ENCODE measurements at regions of chr5 and their contacts with region 1.

Region 1: GRCh38 chr5:154273028-154273617 is 82.6 kb downstream of the GALNT10 start:
- DNase-seq: peak; percentile 31
- CTCF ChIP-seq: no peak

Region 2: GRCh38 chr5:154228696-154229095 is 44.4 kb before region 1 on chr5:
- CTCF ChIA-PET with region 1: no interaction called
- POLR2A ChIA-PET with region 1: no interaction called
- DNase-seq: peak; percentile 71
- CTCF ChIP-seq: no peak

Region 3: DNA sequence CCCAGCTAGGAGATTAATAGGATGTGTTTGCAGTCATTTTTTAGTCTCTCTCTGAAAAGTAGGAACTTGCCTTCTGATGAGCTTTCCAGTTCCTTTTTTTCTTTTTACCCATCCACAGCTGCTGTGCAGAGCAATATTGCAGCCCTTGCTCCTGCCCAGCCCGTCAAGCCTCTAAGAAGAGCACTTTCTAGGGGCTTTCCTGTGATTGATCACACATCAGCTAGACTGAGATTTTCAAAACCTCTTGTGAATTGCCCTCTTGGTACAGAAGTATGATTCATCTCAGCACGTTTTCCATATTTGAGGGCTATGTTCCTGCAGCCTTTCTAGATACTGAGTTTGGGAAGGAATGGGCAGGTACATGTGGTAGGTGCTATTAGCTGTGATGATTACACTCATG is 11.3 kb after region 1 on chr5:
- CTCF ChIA-PET with region 1: interaction called, 11 read pairs
- POLR2A ChIA-PET with region 1: no interaction called
- DNase-seq: peak; percentile 55
- CTCF ChIP-seq: no peak